MCF 10A (cell line): ENCODE measurements at regions of chr20 and their contacts with region 1.

Region 1: DNA sequence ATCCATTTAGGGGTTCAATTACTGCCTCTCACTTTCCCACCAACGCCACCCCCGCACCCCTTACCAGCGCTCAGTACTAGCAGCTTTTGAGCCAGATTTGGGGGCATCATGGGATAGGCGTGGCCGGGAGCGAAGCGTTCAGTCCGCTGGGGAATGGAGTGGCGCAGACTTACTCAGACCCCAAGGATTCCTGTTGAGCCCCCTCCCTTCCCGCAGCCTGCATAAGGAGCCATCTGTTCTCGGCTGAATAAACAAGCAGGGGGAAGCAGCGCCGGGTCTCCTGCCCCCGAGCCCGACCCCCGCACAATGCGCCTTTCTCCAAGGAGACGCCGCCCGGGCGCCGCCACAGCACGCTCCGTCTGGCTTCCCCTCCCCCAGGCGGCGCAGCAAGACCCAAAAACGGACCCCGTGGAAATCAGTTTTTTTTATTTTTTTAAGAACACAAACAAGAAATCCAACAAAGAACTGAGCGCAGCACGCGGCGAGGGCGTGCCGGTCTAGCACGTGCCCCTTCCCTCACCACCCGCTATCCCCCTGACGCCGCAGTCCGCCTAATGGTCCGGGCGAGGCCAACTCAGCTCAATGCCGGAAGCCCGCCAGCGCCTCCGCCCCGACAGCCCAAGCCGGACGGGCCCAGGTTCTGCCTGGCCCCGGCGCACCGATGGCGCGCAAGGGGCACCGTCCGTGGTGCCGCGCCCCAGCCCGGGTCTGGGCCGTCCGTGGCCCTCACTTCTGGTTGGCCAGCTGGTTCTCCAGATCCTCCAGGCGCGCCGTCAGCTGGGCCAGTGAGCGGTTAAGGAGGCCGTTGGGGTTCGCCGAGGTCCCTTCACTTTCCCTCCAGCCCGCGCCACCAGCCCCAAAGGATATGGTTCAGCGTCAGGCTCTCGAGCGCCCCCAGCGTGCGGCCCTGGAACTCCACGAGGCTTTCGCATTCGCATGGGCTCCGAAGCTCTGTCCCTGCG is 13.3 kb upstream of the RBPJL start:
- DNase-seq: peak; percentile 79
- H3K4me3 Mint-ChIP-seq: peak overlapping the region; percentile 64
- H3K27ac Mint-ChIP-seq: no peak overlapping the region
- H3K4me1 Mint-ChIP-seq: peaks cover 12% of the 10 kb centered on the region
- H3K27me3 Mint-ChIP-seq: no peaks in the 10 kb centered on the region
- CTCF ChIP-seq: peak; percentile 97

Region 2: DNA sequence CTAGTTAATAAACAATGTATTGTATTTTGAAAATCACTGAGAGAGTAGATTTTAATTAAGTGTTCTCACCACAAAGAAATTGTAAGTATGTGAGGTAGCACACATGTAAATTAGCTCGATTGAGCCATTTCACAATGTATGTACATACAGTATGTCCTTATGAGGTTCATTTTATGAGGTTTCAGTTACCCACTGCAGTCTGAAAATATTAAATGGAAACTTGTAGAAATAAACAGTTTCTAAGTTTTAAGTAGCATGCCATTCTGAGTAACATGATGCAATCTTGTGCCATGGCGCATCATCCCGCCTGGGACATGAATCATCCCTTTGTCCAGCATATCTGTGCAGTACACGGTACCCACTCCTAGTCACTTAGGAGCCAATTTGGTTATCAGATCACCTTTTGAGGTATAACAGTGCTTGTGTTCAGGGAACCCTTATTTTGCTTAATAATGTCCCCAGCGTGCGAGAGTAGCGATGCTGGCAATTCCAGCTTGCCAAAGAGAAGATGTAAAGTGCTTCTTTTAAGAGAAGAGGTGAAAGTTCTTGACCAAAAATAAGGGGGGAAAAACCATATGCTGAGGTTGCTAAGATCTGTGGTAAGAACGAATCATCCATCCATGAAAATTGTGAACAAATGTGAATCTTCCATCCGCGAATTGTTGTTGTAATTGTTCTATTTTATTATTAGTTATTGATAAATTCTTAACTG is 257.1 kb before region 1 on chr20:
- CTCF ChIA-PET with region 1: interaction called, 149 read pairs
- POLR2A ChIA-PET with region 1: interaction called, 3 read pairs
- intact Hi-C with region 1: no loop called
- DNase-seq: peak; percentile 85
- H3K4me3 Mint-ChIP-seq: peak overlapping the region; percentile 60
- H3K27ac Mint-ChIP-seq: peak overlapping the region; percentile 95
- H3K4me1 Mint-ChIP-seq: peaks cover 57% of the 10 kb centered on the region
- H3K27me3 Mint-ChIP-seq: no peaks in the 10 kb centered on the region
- CTCF ChIP-seq: no peak

Region 3: GRCh38 chr20:45087097-45087790 is 206.1 kb before region 1 on chr20:
- CTCF ChIA-PET with region 1: interaction called, 167 read pairs
- POLR2A ChIA-PET with region 1: no interaction called
- intact Hi-C with region 1: no loop called
- DNase-seq: no peak
- H3K4me3 Mint-ChIP-seq: no peak overlapping the region
- H3K27ac Mint-ChIP-seq: no peak overlapping the region
- H3K4me1 Mint-ChIP-seq: peaks cover 14% of the 10 kb centered on the region
- H3K27me3 Mint-ChIP-seq: no peaks in the 10 kb centered on the region
- CTCF ChIP-seq: no peak

Region 4: GRCh38 chr20:45138561-45139300 is 154.6 kb before region 1 on chr20:
- CTCF ChIA-PET with region 1: interaction called, 144 read pairs
- POLR2A ChIA-PET with region 1: interaction called, 14 read pairs
- intact Hi-C with region 1: loop called (anchors 1 kb)
- DNase-seq: peak; percentile 74
- H3K4me3 Mint-ChIP-seq: no peak overlapping the region
- H3K27ac Mint-ChIP-seq: no peak overlapping the region
- H3K4me1 Mint-ChIP-seq: no peaks in the 10 kb centered on the region
- H3K27me3 Mint-ChIP-seq: no peaks in the 10 kb centered on the region
- CTCF ChIP-seq: peak; percentile 85

Region 5: GRCh38 chr20:45187662-45188061 is 105.7 kb before region 1 on chr20:
- CTCF ChIA-PET with region 1: interaction called, 20 read pairs
- POLR2A ChIA-PET with region 1: interaction called, 3 read pairs
- intact Hi-C with region 1: no loop called
- DNase-seq: no peak
- H3K4me3 Mint-ChIP-seq: no peak overlapping the region
- H3K27ac Mint-ChIP-seq: no peak overlapping the region
- H3K4me1 Mint-ChIP-seq: no peaks in the 10 kb centered on the region
- H3K27me3 Mint-ChIP-seq: peaks cover 14% of the 10 kb centered on the region
- CTCF ChIP-seq: no peak

Region 6: GRCh38 chr20:45311589-45312211 is 18.4 kb after region 1 on chr20:
- CTCF ChIA-PET with region 1: interaction called, 66 read pairs
- POLR2A ChIA-PET with region 1: no interaction called
- intact Hi-C with region 1: no loop called
- DNase-seq: peak; percentile 55
- H3K4me3 Mint-ChIP-seq: no peak overlapping the region
- H3K27ac Mint-ChIP-seq: no peak overlapping the region
- H3K4me1 Mint-ChIP-seq: no peaks in the 10 kb centered on the region
- H3K27me3 Mint-ChIP-seq: no peaks in the 10 kb centered on the region
- CTCF ChIP-seq: peak; percentile 80